HepG2 (cell line): ENCODE measurements at regions of chr13 and their contacts with region 1.

Region 1: DNA sequence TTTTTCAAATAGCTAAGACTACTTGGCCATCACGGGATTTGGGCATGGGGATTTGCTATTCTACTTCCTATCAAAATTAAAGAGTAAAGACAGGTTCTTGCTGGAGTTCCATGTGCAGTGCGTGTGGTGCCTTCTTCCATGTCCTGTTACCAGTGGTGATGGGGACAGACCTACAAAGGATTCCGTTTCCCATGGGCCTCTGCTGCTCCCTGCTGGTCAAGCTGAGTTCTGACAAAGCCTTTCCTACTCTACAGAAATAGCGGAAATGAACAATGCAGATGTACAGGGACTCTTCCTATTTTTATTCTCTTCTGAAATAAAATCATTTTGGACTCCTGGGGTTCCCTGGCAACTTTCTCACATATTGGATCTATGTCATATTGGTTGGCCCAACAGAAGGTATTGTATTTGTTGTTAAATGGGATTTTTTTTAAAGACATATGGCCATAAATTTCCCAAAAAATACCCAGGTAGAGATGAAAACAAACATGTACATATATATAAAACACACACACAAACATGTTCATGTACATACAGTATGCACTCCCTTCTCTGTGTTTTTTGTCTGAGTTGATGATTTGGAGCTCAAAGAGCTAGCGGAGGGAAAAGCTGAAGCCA is 90.5 kb upstream of the SLC15A1 start:
- DNase-seq: peak; percentile 69
- ATAC-seq: peak; percentile 91
- H3K4me3 ChIP-seq: no peak overlapping the region
- H3K27ac ChIP-seq: no peak overlapping the region
- H3K4me1 ChIP-seq: peaks cover 10% of the 10 kb centered on the region
- H3K27me3 ChIP-seq: no peaks in the 10 kb centered on the region; a peak in 1 of 5 replicates
- CTCF ChIP-seq: peak; percentile 90
- EP300 ChIP-seq: no peak
- POLR2A ChIP-seq: no peak
- RAD21 ChIP-seq: peak; percentile 66; the same call in 1 of the 2 replicates

Region 2: DNA sequence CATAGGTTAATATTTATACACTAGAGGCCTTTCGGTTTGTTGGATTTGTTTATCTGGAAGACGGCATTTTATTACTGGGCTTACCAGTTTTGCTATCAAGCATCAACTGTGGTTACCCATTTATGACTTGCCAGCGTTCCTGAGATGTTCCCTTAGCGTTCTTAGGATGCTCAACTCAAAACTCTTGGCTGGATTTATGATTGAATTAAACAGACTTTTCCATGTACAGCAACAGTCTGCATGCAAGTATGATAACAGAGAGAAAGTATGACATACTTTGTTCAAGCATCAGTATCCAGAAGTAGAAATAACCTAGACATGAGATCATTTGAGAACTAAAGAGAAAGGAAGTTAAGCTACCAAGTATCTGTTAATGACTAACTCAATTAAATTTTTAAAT is 636.0 kb before region 1 on chr13:
- CTCF ChIA-PET with region 1: no interaction called
- POLR2A ChIA-PET with region 1: no interaction called
- in situ Hi-C with region 1: no loop called
- intact Hi-C with region 1: loop called (anchors 10 kb)
- DNase-seq: no peak
- ATAC-seq: no peak
- H3K4me3 ChIP-seq: no peak overlapping the region
- H3K27ac ChIP-seq: no peak overlapping the region
- H3K4me1 ChIP-seq: peaks cover 45% of the 10 kb centered on the region
- H3K27me3 ChIP-seq: no peaks in the 10 kb centered on the region
- CTCF ChIP-seq: no peak
- EP300 ChIP-seq: no peak
- POLR2A ChIP-seq: no peak
- RAD21 ChIP-seq: no peak

Region 3: GRCh38 chr13:98466634-98467236 is 376.2 kb before region 1 on chr13:
- CTCF ChIA-PET with region 1: no interaction called
- POLR2A ChIA-PET with region 1: no interaction called
- in situ Hi-C with region 1: loop called (anchors 10 kb)
- intact Hi-C with region 1: no loop called
- DNase-seq: peak; percentile 43
- ATAC-seq: peak; percentile 74
- H3K4me3 ChIP-seq: no peak overlapping the region
- H3K27ac ChIP-seq: no peak overlapping the region
- H3K4me1 ChIP-seq: peaks cover 16% of the 10 kb centered on the region
- H3K27me3 ChIP-seq: no peaks in the 10 kb centered on the region
- CTCF ChIP-seq: peak; percentile 69
- EP300 ChIP-seq: no peak
- POLR2A ChIP-seq: no peak
- RAD21 ChIP-seq: peak; percentile 33

Region 4: GRCh38 chr13:98672944-98673545 is 169.9 kb before region 1 on chr13:
- CTCF ChIA-PET with region 1: interaction called, 7 read pairs
- POLR2A ChIA-PET with region 1: no interaction called
- in situ Hi-C with region 1: no loop called
- intact Hi-C with region 1: loop called (anchors 2 kb)
- DNase-seq: peak; percentile 81
- ATAC-seq: peak; percentile 93
- H3K4me3 ChIP-seq: peak overlapping the region; percentile 31 to 56 (median 50); a peak in 5 of 6 replicates
- H3K27ac ChIP-seq: no peak overlapping the region
- H3K4me1 ChIP-seq: peaks cover 44% of the 10 kb centered on the region
- H3K27me3 ChIP-seq: no peaks in the 10 kb centered on the region
- CTCF ChIP-seq: peak; percentile 82
- EP300 ChIP-seq: no peak
- POLR2A ChIP-seq: no peak
- RAD21 ChIP-seq: peak; percentile 82; the same call in 1 of the 2 replicates

Region 5: GRCh38 chr13:98826146-98826545 is 16.8 kb before region 1 on chr13:
- CTCF ChIA-PET with region 1: no interaction called
- POLR2A ChIA-PET with region 1: no interaction called
- in situ Hi-C with region 1: no loop called
- intact Hi-C with region 1: no loop called
- DNase-seq: no peak
- ATAC-seq: no peak
- H3K4me3 ChIP-seq: no peak overlapping the region
- H3K27ac ChIP-seq: no peak overlapping the region
- H3K4me1 ChIP-seq: peaks cover 15% of the 10 kb centered on the region
- H3K27me3 ChIP-seq: no peaks in the 10 kb centered on the region
- CTCF ChIP-seq: no peak
- EP300 ChIP-seq: no peak
- POLR2A ChIP-seq: no peak
- RAD21 ChIP-seq: no peak